Activated CD4-positive, alpha-beta T cell treated with anti-CD3 and anti-CD28 coated beads for 36 hours (primary cell): ENCODE measurements at regions of chr12 and their contacts with region 1.

Region 1: GRCh38 chr12:123580772-123581171 is 3.6 kb upstream of the TMED2 start:
- DNase-seq: no peak
- ATAC-seq: no peak
- H3K4me3 Mint-ChIP-seq: no peak overlapping the region
- H3K27ac Mint-ChIP-seq: no peak overlapping the region
- H3K4me1 Mint-ChIP-seq: peaks cover 18% of the 10 kb centered on the region
- H3K27me3 Mint-ChIP-seq: no peaks in the 10 kb centered on the region

Region 2: GRCh38 chr12:122980183-122981046 is 600.4 kb before region 1 on chr12 and contains the start of gene ARL6IP4:
- CTCF ChIA-PET with region 1: interaction called, 4 read pairs
- POLR2A ChIA-PET with region 1: no interaction called
- intact Hi-C with region 1: loop called in 1 of 2 experiments (anchors 1 kb)
- DNase-seq: peak; percentile 82
- ATAC-seq: peak; percentile 77
- H3K4me3 Mint-ChIP-seq: peak within 1 kb of the TSS; percentile 87
- H3K27ac Mint-ChIP-seq: peak within 1 kb of the TSS; percentile 85
- H3K4me1 Mint-ChIP-seq: peaks cover 55% of the 10 kb centered on the region
- H3K27me3 Mint-ChIP-seq: no peaks in the 10 kb centered on the region
- total RNA-seq, gene ARL6IP4: 141 to 163 TPM

Region 3: GRCh38 chr12:123388177-123388947 is 192.4 kb before region 1 on chr12:
- CTCF ChIA-PET with region 1: interaction called, 3 read pairs
- POLR2A ChIA-PET with region 1: interaction called, 3 read pairs
- intact Hi-C with region 1: loop called in 1 of 2 experiments (anchors 1 kb)
- DNase-seq: peak; percentile 86
- ATAC-seq: peak; percentile 43
- H3K4me3 Mint-ChIP-seq: peak overlapping the region; percentile 76
- H3K27ac Mint-ChIP-seq: peak overlapping the region; percentile 81
- H3K4me1 Mint-ChIP-seq: peaks cover 35% of the 10 kb centered on the region
- H3K27me3 Mint-ChIP-seq: no peaks in the 10 kb centered on the region

Region 4: GRCh38 chr12:123457980-123458783 is 122.6 kb before region 1 on chr12 and contains the start of gene SNRNP35:
- CTCF ChIA-PET with region 1: interaction called, 4 read pairs
- POLR2A ChIA-PET with region 1: no interaction called
- intact Hi-C with region 1: loop called (anchors 1 to 5 kb)
- DNase-seq: peak; percentile 88
- ATAC-seq: peak; percentile 73
- H3K4me3 Mint-ChIP-seq: peak within 1 kb of the TSS; percentile 98
- H3K27ac Mint-ChIP-seq: peak within 1 kb of the TSS; percentile 100
- H3K4me1 Mint-ChIP-seq: peaks cover 26% of the 10 kb centered on the region
- H3K27me3 Mint-ChIP-seq: no peaks in the 10 kb centered on the region
- total RNA-seq, gene SNRNP35: 24.1 to 24.8 TPM

Region 5: GRCh38 chr12:123494124-123494851 is 86.5 kb before region 1 on chr12:
- CTCF ChIA-PET with region 1: no interaction called
- POLR2A ChIA-PET with region 1: no interaction called
- intact Hi-C with region 1: no loop called
- DNase-seq: no peak
- ATAC-seq: no peak
- H3K4me3 Mint-ChIP-seq: no peak overlapping the region
- H3K27ac Mint-ChIP-seq: no peak overlapping the region
- H3K4me1 Mint-ChIP-seq: no peaks in the 10 kb centered on the region
- H3K27me3 Mint-ChIP-seq: no peaks in the 10 kb centered on the region

Region 6: GRCh38 chr12:123550700-123551099 is 30.1 kb before region 1 on chr12:
- CTCF ChIA-PET with region 1: no interaction called
- POLR2A ChIA-PET with region 1: no interaction called
- intact Hi-C with region 1: no loop called
- DNase-seq: no peak
- ATAC-seq: no peak
- H3K4me3 Mint-ChIP-seq: no peak overlapping the region
- H3K27ac Mint-ChIP-seq: no peak overlapping the region
- H3K4me1 Mint-ChIP-seq: no peaks in the 10 kb centered on the region
- H3K27me3 Mint-ChIP-seq: no peaks in the 10 kb centered on the region

Region 7: GRCh38 chr12:123601602-123602489 is 21.1 kb after region 1 on chr12 and contains the start of gene DDX55:
- CTCF ChIA-PET with region 1: interaction called, 3 read pairs
- POLR2A ChIA-PET with region 1: interaction called, 4 read pairs
- intact Hi-C with region 1: loop called (anchors 1 kb)
- DNase-seq: peak; percentile 93
- ATAC-seq: peak; percentile 95
- H3K4me3 Mint-ChIP-seq: peak within 1 kb of the TSS; percentile 85
- H3K27ac Mint-ChIP-seq: peak within 1 kb of the TSS; percentile 92
- H3K4me1 Mint-ChIP-seq: peaks cover 36% of the 10 kb centered on the region
- H3K27me3 Mint-ChIP-seq: no peaks in the 10 kb centered on the region
- total RNA-seq, gene DDX55: 44.3 to 49.4 TPM

Region 8: DNA sequence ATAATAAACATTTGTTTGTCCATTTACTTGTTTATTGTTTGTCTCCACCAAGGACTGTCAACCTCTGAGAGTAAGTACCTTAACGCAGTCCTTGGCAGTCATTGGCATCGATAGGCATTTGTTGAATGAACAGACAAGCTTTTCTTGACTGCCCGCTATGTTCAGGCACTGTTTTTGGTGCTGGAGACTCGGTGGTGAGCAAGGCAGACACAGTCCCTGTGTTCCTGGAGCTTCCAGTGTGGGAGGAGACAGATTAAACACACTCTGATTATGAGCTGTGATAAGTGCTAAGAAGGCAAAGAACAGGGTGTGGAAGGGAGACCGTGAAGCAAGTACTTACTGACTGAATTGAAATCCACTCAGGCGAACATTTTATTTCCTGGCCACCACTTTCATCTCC is 132.6 kb after region 1 on chr12:
- CTCF ChIA-PET with region 1: no interaction called
- POLR2A ChIA-PET with region 1: no interaction called
- intact Hi-C with region 1: loop called in 1 of 2 experiments (anchors 1 kb)
- DNase-seq: peak; percentile 35
- ATAC-seq: peak; percentile 11
- H3K4me3 Mint-ChIP-seq: peak overlapping the region; percentile 96
- H3K27ac Mint-ChIP-seq: peak overlapping the region; percentile 96
- H3K4me1 Mint-ChIP-seq: peaks cover 46% of the 10 kb centered on the region
- H3K27me3 Mint-ChIP-seq: no peaks in the 10 kb centered on the region